B cell (primary cell): ENCODE measurements at regions of chr17 and their contacts with region 1.

Region 1: DNA sequence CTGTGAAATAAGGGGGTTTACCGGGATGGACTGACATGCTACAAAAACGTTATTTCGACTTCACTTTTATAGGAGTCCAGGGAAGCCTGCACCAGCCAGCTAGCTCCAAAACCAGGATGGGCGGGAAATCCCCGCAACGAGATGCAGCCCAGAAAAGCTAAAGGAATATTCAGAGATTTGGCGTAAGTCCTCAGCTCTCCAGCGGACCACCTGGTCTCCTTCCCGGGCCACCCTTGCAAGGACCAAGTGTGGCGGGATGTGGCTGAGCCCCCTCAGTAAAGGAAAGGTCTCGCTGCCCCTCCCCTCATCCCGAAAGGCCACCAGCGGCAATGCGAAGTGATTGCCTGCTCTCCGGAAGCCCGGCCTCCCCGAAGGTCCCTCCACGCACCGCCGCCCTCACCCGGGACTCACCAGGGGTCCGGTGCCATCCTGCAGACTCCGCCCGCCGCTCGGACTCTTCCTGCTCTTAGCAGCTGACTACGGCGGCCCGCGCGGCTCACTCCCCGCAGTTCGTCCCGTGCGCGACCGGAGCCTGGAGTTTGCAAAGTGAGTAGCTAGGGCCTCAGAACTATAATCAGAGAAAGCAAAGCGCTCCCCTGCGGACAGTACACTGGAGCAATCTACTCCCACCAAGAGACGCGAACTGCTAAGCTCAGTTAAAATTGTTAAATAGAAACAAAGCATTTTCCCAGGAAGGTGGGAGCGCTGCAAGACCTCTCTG is at the start of gene STX8:
- DNase-seq: peak; percentile 84
- ATAC-seq: peak; percentile 87
- H3K4me3 ChIP-seq: peak within 1 kb of the TSS; percentile 67 to 97 (median 82)
- H3K4me3 Mint-ChIP-seq: peak within 1 kb of the TSS; percentile 99
- H3K27ac ChIP-seq: peak within 1 kb of the TSS; percentile 18 to 72
- H3K27ac Mint-ChIP-seq: peak within 1 kb of the TSS; percentile 97
- H3K4me1 ChIP-seq: peaks cover 12 to 19% of the 10 kb centered on the region in 2 donors
- H3K4me1 Mint-ChIP-seq: peaks cover 23% of the 10 kb centered on the region
- H3K27me3 ChIP-seq: no peaks in the 10 kb centered on the region
- H3K27me3 Mint-ChIP-seq: no peaks in the 10 kb centered on the region
- CTCF ChIP-seq: no peak
- total RNA-seq, gene STX8: 58.2 and 61.5 TPM in 2 replicates

Region 2: DNA sequence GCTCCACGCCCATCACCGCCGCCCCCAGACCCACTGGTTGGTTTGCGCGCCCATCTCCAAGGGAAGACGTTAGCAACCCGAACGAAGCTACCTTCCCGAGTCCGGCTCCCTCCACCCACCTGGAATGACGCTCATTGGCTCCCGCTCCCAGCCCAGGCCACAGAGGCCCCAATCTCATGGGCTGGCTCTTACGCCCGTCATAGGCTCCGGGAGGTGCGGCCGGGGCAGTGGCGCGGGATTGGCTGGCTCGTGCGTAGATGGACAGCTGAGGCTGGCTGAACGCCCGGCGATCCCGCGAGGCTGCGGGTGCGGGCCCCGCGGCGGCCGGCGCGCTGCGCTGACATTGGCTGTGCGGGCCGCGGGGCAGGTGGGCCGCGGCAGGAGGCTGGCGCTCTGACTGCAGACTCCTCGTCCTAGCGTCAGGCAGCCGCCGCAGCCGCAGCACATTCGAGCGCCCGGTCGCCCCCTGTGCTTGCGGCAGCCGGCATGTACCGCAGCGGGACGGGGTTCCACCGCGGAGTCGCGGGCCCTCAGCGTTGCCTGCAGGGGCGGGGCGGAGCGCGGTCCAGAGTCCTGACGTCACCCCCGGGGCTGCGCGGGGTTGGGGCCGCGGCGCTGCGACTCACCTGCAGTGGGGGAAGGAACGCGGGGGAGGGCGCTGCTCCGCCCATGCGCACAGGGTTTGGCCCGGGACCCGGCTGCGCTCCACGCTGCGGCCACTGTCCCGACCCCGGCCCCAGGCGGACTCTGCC is 944.6 kb before region 1 on chr17:
- CTCF ChIA-PET with region 1: no interaction called
- POLR2A ChIA-PET with region 1: no interaction called
- intact Hi-C with region 1: loop called (anchors 10 kb)
- DNase-seq: peak; percentile 93
- ATAC-seq: peak; percentile 95
- H3K4me3 ChIP-seq: peak overlapping the region; percentile 2 to 85 (median 69)
- H3K4me3 Mint-ChIP-seq: peak overlapping the region; percentile 97
- H3K27ac ChIP-seq: peak overlapping the region in 1 of 2 donors; percentile 41
- H3K27ac Mint-ChIP-seq: peak overlapping the region; percentile 67
- H3K4me1 ChIP-seq: peaks cover 17 to 23% of the 10 kb centered on the region in 2 donors
- H3K4me1 Mint-ChIP-seq: peaks cover 21% of the 10 kb centered on the region
- H3K27me3 ChIP-seq: peaks cover 0 to 40% (median 32%) of the 10 kb centered on the region in 4 experiments
- H3K27me3 Mint-ChIP-seq: peaks cover 50% of the 10 kb centered on the region
- CTCF ChIP-seq: peak; percentile 16

Region 3: GRCh38 chr17:9755083-9755482 is 179.5 kb after region 1 on chr17:
- CTCF ChIA-PET with region 1: no interaction called
- POLR2A ChIA-PET with region 1: no interaction called
- intact Hi-C with region 1: loop called (anchors 10 kb)
- DNase-seq: no peak
- ATAC-seq: no peak
- H3K4me3 ChIP-seq: no peak overlapping the region
- H3K4me3 Mint-ChIP-seq: no peak overlapping the region
- H3K27ac ChIP-seq: no peak overlapping the region
- H3K27ac Mint-ChIP-seq: no peak overlapping the region
- H3K4me1 ChIP-seq: no peaks in the 10 kb centered on the region
- H3K4me1 Mint-ChIP-seq: no peaks in the 10 kb centered on the region
- H3K27me3 ChIP-seq: peaks cover 0 to 4% (median 2%) of the 10 kb centered on the region in 4 experiments
- H3K27me3 Mint-ChIP-seq: peaks cover 20% of the 10 kb centered on the region
- CTCF ChIP-seq: no peak

Region 4: DNA sequence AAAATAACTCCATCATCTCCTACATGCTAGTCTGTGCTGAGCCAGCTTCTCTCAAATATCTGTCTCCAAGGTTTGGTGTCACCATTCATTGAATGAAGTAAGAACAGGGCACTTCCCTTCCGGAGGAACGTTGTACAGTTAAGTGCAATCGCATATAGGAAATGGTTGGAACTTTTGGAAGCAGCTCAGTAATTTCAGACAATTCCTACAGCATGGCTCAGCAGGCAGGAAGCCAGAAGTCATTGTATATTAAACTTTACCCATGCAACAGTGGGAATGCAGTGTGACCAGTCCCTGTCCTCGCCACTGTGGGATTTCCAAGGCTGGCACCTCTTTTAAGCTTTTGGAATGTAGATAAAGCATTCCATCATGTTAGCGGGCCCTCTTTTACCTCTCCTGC is 1025.0 kb after region 1 on chr17:
- CTCF ChIA-PET with region 1: no interaction called
- POLR2A ChIA-PET with region 1: no interaction called
- intact Hi-C with region 1: loop called (anchors 5 kb)
- DNase-seq: no peak
- ATAC-seq: no peak
- H3K4me3 ChIP-seq: no peak overlapping the region
- H3K4me3 Mint-ChIP-seq: no peak overlapping the region
- H3K27ac ChIP-seq: no peak overlapping the region
- H3K27ac Mint-ChIP-seq: no peak overlapping the region
- H3K4me1 ChIP-seq: no peaks in the 10 kb centered on the region
- H3K4me1 Mint-ChIP-seq: no peaks in the 10 kb centered on the region
- H3K27me3 ChIP-seq: peaks cover 0 to 4% (median 0%) of the 10 kb centered on the region in 4 experiments
- H3K27me3 Mint-ChIP-seq: peaks cover 11% of the 10 kb centered on the region
- CTCF ChIP-seq: no peak